ENCODE measurements at regions of chr2 and their contacts with region 1.

Region 1: GRCh38 chr2:237441605-237442274 is 27.8 kb upstream of the COL6A3 start:
- DNase-seq: peak; percentile 69
- H3K4me3 Mint-ChIP-seq: peak overlapping the region; percentile 40
- H3K27ac Mint-ChIP-seq: peak overlapping the region; percentile 98
- H3K4me1 Mint-ChIP-seq: peaks cover 73% of the 10 kb centered on the region
- H3K27me3 Mint-ChIP-seq: peaks cover 2% of the 10 kb centered on the region

Region 2: GRCh38 chr2:237459741-237460174 is 18.0 kb after region 1 on chr2:
- CTCF ChIA-PET with region 1: no interaction called
- POLR2A ChIA-PET with region 1: interaction called, 4 read pairs
- intact Hi-C with region 1: loop called (anchors 1 kb)
- DNase-seq: no peak
- H3K4me3 Mint-ChIP-seq: no peak overlapping the region
- H3K27ac Mint-ChIP-seq: no peak overlapping the region
- H3K4me1 Mint-ChIP-seq: peaks cover 12% of the 10 kb centered on the region
- H3K27me3 Mint-ChIP-seq: no peaks in the 10 kb centered on the region

Region 3: GRCh38 chr2:237474931-237475703 is 33.4 kb after region 1 on chr2:
- CTCF ChIA-PET with region 1: interaction called, 25 read pairs
- POLR2A ChIA-PET with region 1: interaction called, 15 read pairs
- intact Hi-C with region 1: loop called (anchors 2 kb)
- DNase-seq: peak; percentile 79
- H3K4me3 Mint-ChIP-seq: peak overlapping the region; percentile 68
- H3K27ac Mint-ChIP-seq: peak overlapping the region; percentile 78
- H3K4me1 Mint-ChIP-seq: peaks cover 10% of the 10 kb centered on the region
- H3K27me3 Mint-ChIP-seq: peaks cover 18% of the 10 kb centered on the region

Region 4: GRCh38 chr2:237629739-237630138 is 188.0 kb after region 1 on chr2:
- CTCF ChIA-PET with region 1: no interaction called
- POLR2A ChIA-PET with region 1: no interaction called
- intact Hi-C with region 1: no loop called
- DNase-seq: no peak
- H3K4me3 Mint-ChIP-seq: no peak overlapping the region
- H3K27ac Mint-ChIP-seq: no peak overlapping the region
- H3K4me1 Mint-ChIP-seq: peaks cover 15% of the 10 kb centered on the region
- H3K27me3 Mint-ChIP-seq: peaks cover 24% of the 10 kb centered on the region

Region 5: GRCh38 chr2:237700512-237701032 is 258.8 kb after region 1 on chr2:
- CTCF ChIA-PET with region 1: no interaction called
- POLR2A ChIA-PET with region 1: no interaction called
- intact Hi-C with region 1: loop called (anchors 2 kb)
- DNase-seq: peak; percentile 90
- H3K4me3 Mint-ChIP-seq: peak overlapping the region; percentile 54
- H3K27ac Mint-ChIP-seq: peak overlapping the region; percentile 98
- H3K4me1 Mint-ChIP-seq: peaks cover 94% of the 10 kb centered on the region
- H3K27me3 Mint-ChIP-seq: no peaks in the 10 kb centered on the region

Region 6: GRCh38 chr2:237998530-237998929 is 556.8 kb after region 1 on chr2:
- CTCF ChIA-PET with region 1: no interaction called
- POLR2A ChIA-PET with region 1: no interaction called
- intact Hi-C with region 1: loop called (anchors 2 kb)
- DNase-seq: peak; percentile 65
- H3K4me3 Mint-ChIP-seq: peak overlapping the region; percentile 62
- H3K27ac Mint-ChIP-seq: peak overlapping the region; percentile 93
- H3K4me1 Mint-ChIP-seq: peaks cover 57% of the 10 kb centered on the region
- H3K27me3 Mint-ChIP-seq: no peaks in the 10 kb centered on the region